Head of caudate nucleus (tissue), 42 donors: ENCODE measurements at regions of chr20 and their contacts with region 1.

Region 1: DNA sequence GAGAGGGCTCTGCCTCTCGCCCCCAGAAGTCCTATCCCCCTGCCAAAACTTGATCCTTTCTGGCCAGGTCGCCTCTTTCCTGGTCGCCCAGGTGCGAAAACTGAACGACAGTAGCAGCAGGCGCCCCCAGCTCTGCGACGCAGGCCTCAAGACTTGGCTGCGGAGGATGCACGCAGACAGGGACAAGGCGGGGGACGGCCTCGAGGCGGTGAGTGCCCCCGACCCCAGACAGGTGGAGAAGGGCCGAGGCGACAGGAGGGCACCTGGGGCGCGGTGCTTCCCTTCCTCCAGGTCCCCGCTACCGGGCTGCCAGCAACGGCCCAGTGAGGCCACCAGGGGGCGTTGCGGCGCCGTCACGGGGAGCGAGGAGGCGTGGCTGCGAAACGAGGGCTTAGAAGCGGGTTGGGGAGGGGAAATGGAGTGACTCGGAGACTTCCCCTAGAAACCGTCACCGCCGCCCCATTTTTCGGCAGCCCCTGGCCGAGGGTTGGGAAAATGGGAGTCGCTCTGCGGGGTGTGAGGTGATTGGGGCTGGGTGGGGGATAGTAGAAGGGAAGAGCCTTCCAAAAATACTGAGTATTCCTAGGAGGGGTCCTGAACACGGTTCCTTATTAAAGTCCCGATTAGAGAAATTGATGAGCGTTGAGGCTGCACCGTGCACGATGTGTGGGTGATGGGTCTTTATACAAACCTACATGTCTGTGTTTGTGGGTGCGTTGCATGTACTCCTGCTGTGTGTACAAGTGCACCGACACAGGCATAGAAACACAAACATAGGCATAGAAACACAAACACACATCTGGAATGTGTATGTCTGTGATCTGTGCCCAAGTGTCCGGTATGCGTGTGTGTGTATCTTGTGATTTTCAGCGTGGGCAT is 44.6 kb downstream of the ARHGAP40 start:
- DNase-seq: peak; percentile 40 to 93 (median 85)

Region 2: GRCh38 chr20:38730989-38731737 is 84.9 kb after region 1 on chr20:
- intact Hi-C with region 1: loop called (anchors 5 kb)
- DNase-seq: peak; percentile 54 to 93 (median 84)

Region 3: GRCh38 chr20:38748097-38748860 is 102.1 kb after region 1 on chr20 and contains the start of gene ACTR5:
- intact Hi-C with region 1: loop called (anchors 5 kb)
- DNase-seq: peak; percentile 82 to 97 (median 94)

Region 4: GRCh38 chr20:38893565-38894090 is 247.4 kb after region 1 on chr20:
- intact Hi-C with region 1: loop called (anchors 5 kb)
- DNase-seq: peak; percentile 63 to 94 (median 86)